Calu3 (cell line): ENCODE measurements at regions of chr3 and their contacts with region 1.

Region 1: GRCh38 chr3:148466143-148466542 is 231.6 kb upstream of the AGTR1 start:
- DNase-seq: peak; percentile 18
- H3K4me3 Mint-ChIP-seq: no peak overlapping the region
- H3K27ac Mint-ChIP-seq: no peak overlapping the region
- H3K4me1 Mint-ChIP-seq: no peaks in the 10 kb centered on the region
- H3K27me3 Mint-ChIP-seq: no peaks in the 10 kb centered on the region
- CTCF ChIP-seq: no peak

Region 2: GRCh38 chr3:148329481-148330235 is 136.5 kb before region 1 on chr3:
- CTCF ChIA-PET with region 1: no interaction called
- intact Hi-C with region 1: no loop called
- DNase-seq: no peak
- H3K4me3 Mint-ChIP-seq: no peak overlapping the region
- H3K27ac Mint-ChIP-seq: no peak overlapping the region
- H3K4me1 Mint-ChIP-seq: peaks cover 12% of the 10 kb centered on the region
- H3K27me3 Mint-ChIP-seq: no peaks in the 10 kb centered on the region
- CTCF ChIP-seq: no peak

Region 3: GRCh38 chr3:148450819-148451218 is 15.3 kb before region 1 on chr3:
- CTCF ChIA-PET with region 1: interaction called, 10 read pairs
- intact Hi-C with region 1: no loop called
- DNase-seq: peak; percentile 15
- H3K4me3 Mint-ChIP-seq: no peak overlapping the region
- H3K27ac Mint-ChIP-seq: peak overlapping the region; percentile 26
- H3K4me1 Mint-ChIP-seq: peaks cover 17% of the 10 kb centered on the region
- H3K27me3 Mint-ChIP-seq: no peaks in the 10 kb centered on the region
- CTCF ChIP-seq: no peak

Region 4: GRCh38 chr3:148551767-148552260 is 85.7 kb after region 1 on chr3:
- CTCF ChIA-PET with region 1: no interaction called
- intact Hi-C with region 1: no loop called
- DNase-seq: no peak
- H3K4me3 Mint-ChIP-seq: no peak overlapping the region
- H3K27ac Mint-ChIP-seq: no peak overlapping the region
- H3K4me1 Mint-ChIP-seq: no peaks in the 10 kb centered on the region
- H3K27me3 Mint-ChIP-seq: no peaks in the 10 kb centered on the region
- CTCF ChIP-seq: no peak

Region 5: DNA sequence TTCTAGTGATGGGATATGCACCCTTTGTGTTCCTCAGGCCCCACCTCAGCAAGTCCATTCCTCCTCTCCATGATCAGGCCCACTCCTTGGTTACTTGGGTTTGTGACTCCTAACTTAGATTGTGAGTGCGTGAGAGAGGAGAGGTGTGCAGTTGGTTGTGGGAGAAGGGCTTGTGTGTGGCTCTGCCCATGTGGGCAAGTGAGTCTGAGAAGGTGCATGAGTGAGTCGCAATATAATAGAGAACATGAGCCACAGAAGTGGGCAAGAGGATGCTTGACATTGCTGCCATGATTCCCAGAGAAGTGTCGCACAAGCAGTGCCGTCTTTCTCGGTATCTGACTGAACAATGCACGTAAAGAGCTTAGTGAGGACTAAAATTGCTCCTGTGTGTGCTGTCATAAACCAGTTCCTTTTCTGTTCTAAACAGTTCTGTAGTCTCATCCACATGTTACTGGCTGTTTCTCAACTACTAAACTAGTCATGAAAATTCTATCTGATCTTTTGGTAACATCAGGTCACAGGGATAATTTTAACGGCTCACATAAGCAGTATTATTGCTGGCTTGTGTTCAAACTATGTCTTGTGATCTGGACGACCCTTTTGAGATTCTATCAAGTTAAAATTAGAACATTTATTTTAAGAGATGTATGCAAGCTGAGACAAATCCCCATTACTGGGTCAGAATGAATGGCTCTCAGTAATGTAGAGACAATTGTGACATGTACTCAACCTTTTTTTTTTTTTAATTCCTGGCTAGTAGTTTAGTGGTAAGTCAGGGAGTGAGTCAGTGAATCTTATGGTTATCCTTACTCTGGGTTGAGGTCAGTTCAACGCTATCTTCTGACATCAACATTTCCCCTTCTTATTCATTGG is 550.8 kb after region 1 on chr3:
- CTCF ChIA-PET with region 1: no interaction called
- intact Hi-C with region 1: no loop called
- DNase-seq: no peak
- H3K4me3 Mint-ChIP-seq: no peak overlapping the region
- H3K27ac Mint-ChIP-seq: no peak overlapping the region
- H3K4me1 Mint-ChIP-seq: no peaks in the 10 kb centered on the region
- H3K27me3 Mint-ChIP-seq: no peaks in the 10 kb centered on the region
- CTCF ChIP-seq: no peak